Activated B cell treated with CpG ODN at 0.5 μM for 24 hours (primary cell): ENCODE measurements at regions of chr14 and their contacts with region 1.

Region 1: DNA sequence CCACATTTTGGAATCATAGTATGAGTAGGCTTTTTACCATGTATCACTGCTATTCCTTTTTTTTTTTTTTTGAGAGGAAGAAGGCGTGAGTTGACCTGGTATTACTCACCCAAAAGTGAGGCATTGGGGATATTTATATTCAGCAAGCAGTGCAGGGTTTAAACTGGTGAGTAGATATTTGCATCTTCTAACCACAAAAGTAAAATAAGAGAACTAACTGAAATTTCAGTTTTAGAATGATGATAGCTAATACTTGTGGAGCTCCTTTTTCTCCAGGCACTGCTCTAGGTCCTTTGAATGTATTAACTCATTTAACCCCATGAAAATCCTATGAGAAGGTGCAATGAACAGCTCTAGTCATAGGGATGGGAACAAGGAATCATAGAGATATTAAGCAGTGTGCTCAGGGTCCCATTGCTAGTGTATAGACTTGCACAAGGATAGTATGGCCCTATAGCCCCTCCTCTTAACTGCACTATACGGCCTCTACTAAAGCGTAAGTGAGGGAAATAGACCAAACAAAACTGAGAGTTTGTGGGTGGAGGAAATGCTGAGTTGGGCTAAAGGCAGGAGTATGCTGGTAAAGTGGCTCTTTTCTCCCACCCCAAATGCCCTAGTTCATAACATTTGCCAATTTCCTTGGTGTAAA is 104.3 kb upstream of the MAX start:
- DNase-seq: no peak
- ATAC-seq: peak; percentile 60
- H3K4me3 Mint-ChIP-seq: peak overlapping the region; percentile 76
- H3K27ac Mint-ChIP-seq: peak overlapping the region; percentile 96
- H3K4me1 Mint-ChIP-seq: peaks cover 89% of the 10 kb centered on the region
- H3K27me3 Mint-ChIP-seq: no peaks in the 10 kb centered on the region
- CTCF ChIP-seq: no peak

Region 2: GRCh38 chr14:64855721-64856528 is 350.6 kb before region 1 on chr14:
- CTCF ChIA-PET with region 1: no interaction called
- POLR2A ChIA-PET with region 1: no interaction called
- intact Hi-C with region 1: no loop called
- DNase-seq: no peak
- ATAC-seq: no peak
- H3K4me3 Mint-ChIP-seq: no peak overlapping the region
- H3K27ac Mint-ChIP-seq: no peak overlapping the region
- H3K4me1 Mint-ChIP-seq: no peaks in the 10 kb centered on the region
- H3K27me3 Mint-ChIP-seq: peaks cover 26% of the 10 kb centered on the region
- CTCF ChIP-seq: no peak

Region 3: GRCh38 chr14:65102441-65103149 is 104.0 kb before region 1 on chr14 and contains the start of gene MAX:
- CTCF ChIA-PET with region 1: no interaction called
- POLR2A ChIA-PET with region 1: interaction called, 5 read pairs
- intact Hi-C with region 1: loop called (anchors 1 kb)
- DNase-seq: peak; percentile 92
- ATAC-seq: peak; percentile 86
- H3K4me3 Mint-ChIP-seq: peak within 1 kb of the TSS; percentile 89
- H3K27ac Mint-ChIP-seq: peak within 1 kb of the TSS; percentile 95
- H3K4me1 Mint-ChIP-seq: peaks cover 42% of the 10 kb centered on the region
- H3K27me3 Mint-ChIP-seq: no peaks in the 10 kb centered on the region
- CTCF ChIP-seq: no peak
- total RNA-seq, gene MAX: 115 and 116 TPM in 2 replicates

Region 4: GRCh38 chr14:65179918-65180724 is 26.5 kb before region 1 on chr14:
- CTCF ChIA-PET with region 1: interaction called, 3 read pairs
- POLR2A ChIA-PET with region 1: interaction called, 110 read pairs
- intact Hi-C with region 1: loop called (anchors 1 kb)
- DNase-seq: peak; percentile 46
- ATAC-seq: peak; percentile 93
- H3K4me3 Mint-ChIP-seq: peak overlapping the region; percentile 71
- H3K27ac Mint-ChIP-seq: peak overlapping the region; percentile 86
- H3K4me1 Mint-ChIP-seq: peaks cover 37% of the 10 kb centered on the region
- H3K27me3 Mint-ChIP-seq: no peaks in the 10 kb centered on the region
- CTCF ChIP-seq: no peak

Region 5: DNA sequence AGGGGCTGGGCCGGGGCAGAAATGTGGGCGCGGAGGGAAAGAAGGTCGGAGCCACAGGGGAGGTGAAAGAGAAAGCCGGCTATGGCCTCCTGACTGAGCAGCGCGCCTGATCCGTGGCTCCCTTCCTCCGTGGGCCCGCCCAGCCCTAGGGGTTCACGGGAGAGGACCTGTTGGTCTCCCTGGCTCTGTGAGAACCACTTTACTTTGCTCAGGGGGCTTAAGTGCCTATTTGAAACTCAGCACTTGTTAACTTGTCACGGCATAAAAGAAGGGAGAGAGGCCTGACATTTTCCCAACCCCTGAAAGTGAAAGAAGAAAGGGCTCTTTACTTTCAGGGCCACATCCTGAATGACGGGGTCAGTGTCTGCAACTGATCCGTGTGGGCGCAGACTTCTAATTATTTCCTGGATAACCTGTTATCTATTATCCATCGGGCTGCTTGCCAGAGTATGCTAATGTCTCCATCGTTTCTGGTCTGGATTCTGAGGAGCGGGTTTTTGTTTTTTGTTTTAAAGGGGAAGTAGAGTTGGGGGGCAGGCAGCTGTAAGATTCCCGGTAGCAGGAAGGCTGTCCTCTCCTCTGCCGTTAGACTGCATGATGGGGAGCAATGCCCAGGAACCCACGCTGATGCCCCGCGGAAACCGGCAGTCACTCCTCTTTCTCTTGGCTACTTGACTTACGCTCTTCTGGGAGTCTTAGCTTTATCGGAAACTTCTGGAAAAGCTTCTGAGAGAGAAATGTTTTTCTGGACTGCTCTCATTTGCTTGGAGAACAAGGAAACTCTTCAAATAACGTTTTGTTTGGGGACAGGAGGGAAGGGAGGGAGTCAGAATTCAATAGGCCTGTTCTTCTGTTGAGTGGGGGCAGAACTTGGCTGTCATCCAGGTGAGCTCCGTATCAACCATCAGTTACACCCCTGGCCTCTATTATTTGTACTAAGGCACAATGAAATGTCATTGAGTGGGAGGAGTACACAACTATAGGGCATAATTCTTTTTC is 23.5 kb after region 1 on chr14:
- CTCF ChIA-PET with region 1: interaction called, 7 read pairs
- POLR2A ChIA-PET with region 1: interaction called, 95 read pairs
- intact Hi-C with region 1: loop called (anchors 1 kb)
- DNase-seq: no peak
- ATAC-seq: peak; percentile 32
- H3K4me3 Mint-ChIP-seq: peak overlapping the region; percentile 86
- H3K27ac Mint-ChIP-seq: peak overlapping the region; percentile 87
- H3K4me1 Mint-ChIP-seq: peaks cover 64% of the 10 kb centered on the region
- H3K27me3 Mint-ChIP-seq: no peaks in the 10 kb centered on the region
- CTCF ChIP-seq: no peak

Region 6: DNA sequence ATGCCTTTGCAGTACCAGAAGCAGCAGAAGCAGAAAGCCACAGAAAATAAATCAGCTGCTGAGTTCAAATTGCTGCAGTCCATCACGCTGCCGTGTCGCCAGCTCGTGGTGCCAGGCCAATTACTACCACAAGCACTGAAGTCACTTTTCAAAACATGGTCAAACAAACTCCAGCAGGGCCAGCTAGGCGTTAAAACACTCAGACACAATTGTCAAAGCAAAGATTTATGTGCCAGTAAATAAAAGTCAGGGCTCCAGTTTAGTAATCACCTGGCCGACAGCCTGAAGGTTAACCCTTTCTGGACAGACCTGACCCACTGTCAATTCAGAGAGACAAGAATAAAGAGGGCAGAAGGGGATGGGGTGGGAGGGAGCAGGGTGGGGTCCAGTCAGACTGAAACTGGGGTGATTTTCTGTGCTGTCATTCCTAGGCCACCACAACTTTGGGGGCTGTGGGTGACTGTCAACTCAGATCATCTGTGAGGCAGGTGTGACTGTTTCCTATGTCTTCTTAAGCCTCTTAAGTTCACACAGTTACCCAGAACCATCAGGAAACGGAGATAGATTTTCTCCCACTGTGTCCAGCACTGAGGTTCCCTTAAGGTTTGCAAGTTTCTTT is 96.1 kb after region 1 on chr14:
- CTCF ChIA-PET with region 1: no interaction called
- POLR2A ChIA-PET with region 1: interaction called, 22 read pairs
- intact Hi-C with region 1: loop called (anchors 1 kb)
- DNase-seq: no peak
- ATAC-seq: peak; percentile 40
- H3K4me3 Mint-ChIP-seq: peak overlapping the region; percentile 48
- H3K27ac Mint-ChIP-seq: peak overlapping the region; percentile 96
- H3K4me1 Mint-ChIP-seq: peaks cover 79% of the 10 kb centered on the region
- H3K27me3 Mint-ChIP-seq: no peaks in the 10 kb centered on the region
- CTCF ChIP-seq: no peak

Region 7: GRCh38 chr14:65396082-65396910 is 189.7 kb after region 1 on chr14:
- CTCF ChIA-PET with region 1: no interaction called
- POLR2A ChIA-PET with region 1: interaction called, 4 read pairs
- intact Hi-C with region 1: loop called (anchors 2 kb)
- DNase-seq: no peak
- ATAC-seq: peak; percentile 79
- H3K4me3 Mint-ChIP-seq: peak overlapping the region; percentile 58
- H3K27ac Mint-ChIP-seq: peak overlapping the region; percentile 82
- H3K4me1 Mint-ChIP-seq: peaks cover 32% of the 10 kb centered on the region
- H3K27me3 Mint-ChIP-seq: no peaks in the 10 kb centered on the region
- CTCF ChIP-seq: no peak